ENCODE measurements at regions of chr13 and their contacts with region 1.

Region 1: DNA sequence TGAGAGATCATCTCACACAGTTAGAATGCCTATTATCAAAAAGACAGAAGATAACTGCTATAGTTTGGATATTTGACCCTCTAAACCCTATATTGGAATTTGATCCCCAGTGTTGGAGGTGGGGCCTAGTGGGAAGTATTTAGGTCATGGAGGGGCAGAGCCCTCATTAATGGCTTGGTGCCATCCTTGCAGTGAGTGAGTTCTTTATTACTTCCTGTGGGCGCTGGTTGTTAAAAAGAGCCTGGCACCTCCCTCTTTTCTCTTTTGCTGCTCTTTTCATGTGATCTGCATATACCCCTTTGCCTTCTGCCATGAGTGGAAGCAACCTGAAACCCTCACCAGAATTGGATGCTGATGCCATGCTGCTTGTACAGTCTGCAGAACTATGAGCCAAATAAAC is 66.8 kb downstream of the TDRD3 start:
- DNase-seq: no peak
- ATAC-seq: no peak
- H3K4me3 ChIP-seq: no peak overlapping the region
- H3K27ac ChIP-seq: no peak overlapping the region
- H3K4me1 ChIP-seq: no peaks in the 10 kb centered on the region
- CTCF ChIP-seq: no peak
- EP300 ChIP-seq: no peak
- POLR2A ChIP-seq: no peak
- RAD21 ChIP-seq: no peak

Region 2: GRCh38 chr13:60448907-60449510 is 14.8 kb before region 1 on chr13:
- CTCF ChIA-PET with region 1: interaction called, 11 read pairs
- POLR2A ChIA-PET with region 1: no interaction called
- DNase-seq: peak; percentile 23 to 42
- ATAC-seq: peak in 1 of 2 experiments; percentile 57; a peak in 2 of 6 replicates
- H3K4me3 ChIP-seq: no peak overlapping the region
- H3K27ac ChIP-seq: no peak overlapping the region
- H3K4me1 ChIP-seq: no peaks in the 10 kb centered on the region
- CTCF ChIP-seq: peak; percentile 41
- EP300 ChIP-seq: no peak
- POLR2A ChIP-seq: no peak
- RAD21 ChIP-seq: peak; percentile 36 to 43; a peak in 4 of 5 replicates

Measured in A549 (cell line).